Prostate gland (tissue), 2 donors: ENCODE measurements at regions of chr6 and their contacts with region 1.

Region 1: GRCh38 chr6:44304282-44305199 is 8.6 kb downstream of the AARS2 start:
- DNase-seq: no peak
- H3K4me3 ChIP-seq: no peak overlapping the region
- H3K27ac ChIP-seq: no peak overlapping the region
- H3K4me1 ChIP-seq: no peaks in the 10 kb centered on the region
- H3K27me3 ChIP-seq: no peaks in the 10 kb centered on the region
- CTCF ChIP-seq: peak; percentile 42 to 66 (median 48)
- POLR2A ChIP-seq: no peak

Region 2: GRCh38 chr6:44265007-44265721 is 39.4 kb before region 1 on chr6 and contains the start of gene NFKBIE:
- intact Hi-C with region 1: loop called (anchors 5 kb)
- DNase-seq: peak; percentile 95
- H3K4me3 ChIP-seq: peak within 1 kb of the TSS; percentile 51 to 73
- H3K27ac ChIP-seq: peak within 1 kb of the TSS; percentile 67 to 72
- H3K4me1 ChIP-seq: peaks cover 12% of the 10 kb centered on the region
- H3K27me3 ChIP-seq: no peaks in the 10 kb centered on the region
- CTCF ChIP-seq: peak in 2 of 4 experiments; percentile 40 to 47
- POLR2A ChIP-seq: peak; percentile 97
- total RNA-seq, gene NFKBIE: 20.8 to 34.4 TPM